Dorsolateral prefrontal cortex (tissue), 120 donors: ENCODE measurements at regions of chr16 and their contacts with region 1.

Region 1: DNA sequence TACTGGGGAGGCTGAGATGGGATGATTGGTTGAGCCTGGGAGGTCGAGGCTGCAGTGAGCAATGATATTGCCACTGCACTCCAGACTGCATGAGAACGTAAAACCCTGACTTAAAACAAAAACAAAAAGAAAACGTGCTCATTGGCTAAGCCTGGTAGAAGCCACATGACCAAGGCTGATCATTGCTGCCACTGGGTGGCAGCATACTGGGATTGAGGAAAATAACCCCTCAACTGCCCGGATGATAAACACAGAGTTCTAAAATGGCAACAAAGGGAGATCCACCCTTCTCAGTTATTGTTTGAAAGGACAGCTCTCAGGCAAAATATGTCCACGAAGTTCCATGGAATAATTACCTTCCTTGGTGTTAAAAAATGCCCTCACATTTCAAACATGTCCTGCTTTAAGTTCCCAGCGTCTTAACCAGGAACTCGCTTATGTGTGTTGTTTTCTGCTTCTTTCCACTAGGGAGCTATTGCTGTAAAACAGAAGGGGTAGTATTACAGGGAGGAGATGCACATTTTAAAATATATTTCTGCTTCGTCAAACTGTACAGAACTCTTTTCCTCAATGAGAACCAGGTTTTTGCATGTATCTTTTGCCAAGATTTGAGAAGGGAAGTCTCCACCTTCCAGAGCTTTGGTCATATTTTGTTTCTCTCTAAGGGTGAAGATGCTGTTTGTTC is 675.3 kb downstream of the MAF start:
- DNase-seq: peak in 1 of 10 donors; percentile 31
- H3K4me3 ChIP-seq: no peak overlapping the region
- H3K27ac ChIP-seq: no peak overlapping the region
- H3K27me3 ChIP-seq: no peaks in the 10 kb centered on the region
- CTCF ChIP-seq: peak in 54 of 56 donors; percentile 17 to 64 (median 47)

Region 2: DNA sequence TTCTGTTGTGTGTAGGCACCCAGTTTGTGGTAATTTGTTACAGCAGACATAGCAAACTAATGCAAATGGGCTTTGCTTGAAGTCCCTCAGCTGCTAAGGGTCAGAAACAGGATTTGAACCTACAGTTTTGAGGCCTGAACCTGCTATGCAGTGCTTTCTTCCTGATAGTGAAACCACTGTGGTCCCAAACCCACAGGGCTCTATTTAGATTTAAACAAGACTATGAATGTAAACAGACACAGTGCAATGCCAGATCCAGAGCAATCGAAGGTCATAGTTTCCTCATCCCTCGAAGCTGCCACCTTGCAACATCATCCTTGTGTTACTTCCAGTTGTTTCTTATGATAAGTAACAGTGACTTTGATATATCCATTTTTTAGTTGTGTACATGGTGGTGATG is 195.5 kb before region 1 on chr16:
- intact Hi-C with region 1: no loop called
- DNase-seq: no peak
- H3K4me3 ChIP-seq: no peak overlapping the region
- H3K27ac ChIP-seq: no peak overlapping the region
- H3K27me3 ChIP-seq: no peaks in the 10 kb centered on the region
- CTCF ChIP-seq: no peak

Region 3: DNA sequence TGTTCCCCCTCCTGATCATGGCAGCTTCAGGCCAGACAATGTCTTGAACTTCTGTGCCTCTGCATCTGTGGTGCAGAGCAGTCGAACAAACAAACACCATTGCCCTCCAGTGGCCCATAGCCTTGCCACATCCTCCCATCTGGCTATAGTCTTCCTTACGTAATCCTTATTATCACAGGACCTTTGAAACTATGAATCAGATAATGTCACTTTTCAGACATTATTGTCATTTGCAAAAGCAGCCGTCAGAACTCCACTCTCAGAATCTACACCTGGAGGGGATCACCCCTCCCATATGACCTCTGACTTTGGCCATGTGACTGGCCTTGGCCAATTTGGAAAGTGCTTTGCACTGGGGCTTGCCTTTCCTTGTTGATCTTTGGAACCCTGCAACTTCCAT is 288.0 kb after region 1 on chr16:
- intact Hi-C with region 1: loop called in 1 of 2 experiments (anchors 5 kb)
- DNase-seq: no peak
- H3K4me3 ChIP-seq: no peak overlapping the region
- H3K27ac ChIP-seq: no peak overlapping the region
- H3K27me3 ChIP-seq: no peaks in the 10 kb centered on the region
- CTCF ChIP-seq: peak in 23 of 56 donors; percentile 9 to 45 (median 25)